Activated CD4-positive, alpha-beta T cell treated with anti-CD3 and anti-CD28 coated beads for 36 hours (primary cell): ENCODE measurements at regions of chr2 and their contacts with region 1.

Region 1: GRCh38 chr2:231411831-231412617 is 16.5 kb downstream of the B3GNT7 start:
- DNase-seq: peak; percentile 86
- ATAC-seq: peak; percentile 99
- H3K4me3 Mint-ChIP-seq: peak overlapping the region; percentile 25
- H3K27ac Mint-ChIP-seq: no peak overlapping the region
- H3K4me1 Mint-ChIP-seq: peaks cover 6% of the 10 kb centered on the region
- H3K27me3 Mint-ChIP-seq: peaks cover 30% of the 10 kb centered on the region

Region 2: DNA sequence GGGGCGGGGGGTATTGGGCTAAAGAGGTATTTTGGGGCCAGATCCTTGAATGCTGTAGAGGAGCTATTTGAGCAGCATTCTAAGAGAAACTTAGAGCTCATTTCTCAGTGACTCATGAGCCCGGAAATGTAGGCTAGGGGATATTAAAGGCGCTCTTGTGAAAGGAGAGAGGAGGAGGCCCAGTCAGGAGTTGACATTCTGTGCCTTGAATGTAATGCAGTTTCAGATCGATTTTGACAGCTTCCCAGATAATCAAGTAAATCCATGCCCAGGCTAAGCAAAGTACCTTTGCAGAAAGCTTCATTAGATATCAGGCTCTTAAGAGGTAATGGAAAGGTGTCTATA is 697.9 kb before region 1 on chr2:
- CTCF ChIA-PET with region 1: no interaction called
- POLR2A ChIA-PET with region 1: no interaction called
- intact Hi-C with region 1: no loop called
- DNase-seq: peak; percentile 57
- ATAC-seq: peak; percentile 72
- H3K4me3 Mint-ChIP-seq: peak overlapping the region; percentile 90
- H3K27ac Mint-ChIP-seq: peak overlapping the region; percentile 92
- H3K4me1 Mint-ChIP-seq: peaks cover 50% of the 10 kb centered on the region
- H3K27me3 Mint-ChIP-seq: no peaks in the 10 kb centered on the region

Region 3: GRCh38 chr2:230847883-230848388 is 564.1 kb before region 1 on chr2:
- CTCF ChIA-PET with region 1: no interaction called
- POLR2A ChIA-PET with region 1: no interaction called
- intact Hi-C with region 1: loop called in 1 of 2 experiments (anchors 10 kb)
- DNase-seq: peak; percentile 98
- ATAC-seq: peak; percentile 97
- H3K4me3 Mint-ChIP-seq: no peak overlapping the region
- H3K27ac Mint-ChIP-seq: peak overlapping the region; percentile 47
- H3K4me1 Mint-ChIP-seq: peaks cover 18% of the 10 kb centered on the region
- H3K27me3 Mint-ChIP-seq: peaks cover 19% of the 10 kb centered on the region

Region 4: GRCh38 chr2:231104115-231104713 is 307.8 kb before region 1 on chr2:
- CTCF ChIA-PET with region 1: interaction called, 16 read pairs
- POLR2A ChIA-PET with region 1: no interaction called
- intact Hi-C with region 1: loop called (anchors 1 kb)
- DNase-seq: peak; percentile 76
- ATAC-seq: peak; percentile 93
- H3K4me3 Mint-ChIP-seq: no peak overlapping the region
- H3K27ac Mint-ChIP-seq: no peak overlapping the region
- H3K4me1 Mint-ChIP-seq: peaks cover 14% of the 10 kb centered on the region
- H3K27me3 Mint-ChIP-seq: no peaks in the 10 kb centered on the region

Region 5: GRCh38 chr2:231227309-231228162 is 184.5 kb before region 1 on chr2:
- CTCF ChIA-PET with region 1: interaction called, 19 read pairs
- POLR2A ChIA-PET with region 1: no interaction called
- intact Hi-C with region 1: loop called (anchors 1 kb)
- DNase-seq: peak; percentile 62
- ATAC-seq: peak; percentile 99
- H3K4me3 Mint-ChIP-seq: no peak overlapping the region
- H3K27ac Mint-ChIP-seq: no peak overlapping the region
- H3K4me1 Mint-ChIP-seq: no peaks in the 10 kb centered on the region
- H3K27me3 Mint-ChIP-seq: no peaks in the 10 kb centered on the region

Region 6: DNA sequence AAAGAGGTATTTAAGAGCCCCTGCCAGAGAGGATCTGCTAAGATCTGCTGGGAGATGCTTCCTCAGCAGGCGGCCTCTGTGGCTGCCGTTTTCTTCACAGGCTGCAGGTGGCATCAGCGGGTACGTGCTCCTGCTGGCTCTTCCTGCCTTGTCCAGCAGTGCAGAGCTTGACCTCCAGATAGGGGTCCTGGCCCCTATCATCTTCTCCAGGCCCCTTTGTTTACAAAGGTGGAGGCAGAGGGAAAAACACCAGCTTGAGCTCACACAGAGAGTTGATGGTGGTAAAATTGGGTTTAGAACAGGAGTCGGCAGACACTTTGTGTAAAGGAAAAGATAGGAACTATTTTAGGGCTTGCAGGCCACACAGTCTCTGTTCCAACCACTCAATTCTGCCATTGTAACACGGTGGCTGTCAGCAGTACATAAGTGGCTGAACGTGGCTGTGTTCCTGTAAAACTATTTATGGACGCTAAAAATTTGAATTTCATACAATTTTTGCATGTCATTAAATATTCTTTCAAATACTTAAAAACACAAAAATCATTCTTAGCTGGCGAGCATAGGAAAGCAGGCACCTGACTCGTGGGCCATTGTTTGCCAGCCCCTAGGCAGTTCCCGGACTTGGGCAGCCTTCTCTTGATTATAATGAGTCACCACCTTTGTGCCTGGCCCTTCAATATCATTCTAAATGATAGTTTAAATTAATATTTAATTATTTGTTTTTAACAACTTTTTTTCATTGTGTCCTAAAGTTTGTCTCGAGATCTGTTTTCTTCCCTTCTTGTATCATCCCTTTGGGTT is 114.7 kb before region 1 on chr2:
- CTCF ChIA-PET with region 1: interaction called, 3 read pairs
- POLR2A ChIA-PET with region 1: no interaction called
- intact Hi-C with region 1: loop called (anchors 1 to 5 kb)
- DNase-seq: peak; percentile 58
- ATAC-seq: peak; percentile 74
- H3K4me3 Mint-ChIP-seq: no peak overlapping the region
- H3K27ac Mint-ChIP-seq: no peak overlapping the region
- H3K4me1 Mint-ChIP-seq: no peaks in the 10 kb centered on the region
- H3K27me3 Mint-ChIP-seq: no peaks in the 10 kb centered on the region

Region 7: DNA sequence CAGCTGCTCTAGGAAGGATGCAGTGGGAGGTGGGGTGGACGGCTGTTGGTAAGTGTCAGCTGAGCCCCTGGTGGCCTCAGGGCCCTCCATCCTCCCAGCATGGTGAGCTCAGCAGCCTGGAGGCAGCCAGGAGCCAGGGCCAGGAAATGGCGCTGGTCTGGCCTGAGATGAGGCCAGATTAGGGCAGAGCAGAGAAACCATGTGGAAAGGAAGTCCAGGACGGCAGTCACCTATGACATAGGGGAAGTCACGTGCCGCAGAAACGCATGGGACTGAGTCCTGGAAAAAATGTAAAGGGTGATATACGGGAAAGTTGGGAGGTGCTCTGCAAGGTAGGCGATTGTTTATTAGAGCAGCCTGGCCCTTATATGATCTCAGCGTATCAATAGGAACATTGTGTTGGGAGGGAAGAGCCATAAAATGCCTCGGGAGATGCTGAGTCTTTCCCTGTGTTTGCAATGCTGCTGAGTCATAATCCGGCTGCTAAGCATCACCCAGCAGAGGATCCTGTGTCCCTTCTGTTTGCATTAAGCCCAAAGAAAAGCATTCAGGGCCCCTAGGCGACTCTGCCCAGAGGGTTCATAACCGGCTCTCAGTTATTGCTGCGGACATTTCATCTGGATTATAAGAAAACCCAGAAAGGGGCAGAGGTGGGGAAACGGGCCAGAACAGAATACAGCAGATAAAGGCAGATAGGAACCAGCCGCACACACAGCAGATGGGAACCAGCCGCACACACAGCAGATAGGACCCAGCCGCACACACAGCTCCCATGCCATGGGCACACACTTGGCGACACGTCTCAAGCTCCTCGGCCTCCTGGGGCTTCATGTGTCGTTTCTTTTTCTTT is 46.8 kb before region 1 on chr2:
- CTCF ChIA-PET with region 1: no interaction called
- POLR2A ChIA-PET with region 1: no interaction called
- intact Hi-C with region 1: no loop called
- DNase-seq: no peak
- ATAC-seq: no peak
- H3K4me3 Mint-ChIP-seq: no peak overlapping the region
- H3K27ac Mint-ChIP-seq: no peak overlapping the region
- H3K4me1 Mint-ChIP-seq: peaks cover 7% of the 10 kb centered on the region
- H3K27me3 Mint-ChIP-seq: no peaks in the 10 kb centered on the region

Region 8: GRCh38 chr2:231425811-231426728 is 14.0 kb after region 1 on chr2:
- CTCF ChIA-PET with region 1: interaction called, 14 read pairs
- POLR2A ChIA-PET with region 1: no interaction called
- intact Hi-C with region 1: no loop called
- DNase-seq: peak; percentile 85
- ATAC-seq: peak; percentile 89
- H3K4me3 Mint-ChIP-seq: no peak overlapping the region
- H3K27ac Mint-ChIP-seq: peak overlapping the region; percentile 76
- H3K4me1 Mint-ChIP-seq: peaks cover 21% of the 10 kb centered on the region
- H3K27me3 Mint-ChIP-seq: peaks cover 3% of the 10 kb centered on the region

Region 9: GRCh38 chr2:231452799-231453508 is 40.9 kb after region 1 on chr2:
- CTCF ChIA-PET with region 1: interaction called, 5 read pairs
- POLR2A ChIA-PET with region 1: interaction called, 3 read pairs
- intact Hi-C with region 1: loop called in 1 of 2 experiments (anchors 1 kb)
- DNase-seq: peak; percentile 26
- ATAC-seq: peak; percentile 26
- H3K4me3 Mint-ChIP-seq: no peak overlapping the region
- H3K27ac Mint-ChIP-seq: no peak overlapping the region
- H3K4me1 Mint-ChIP-seq: peaks cover 18% of the 10 kb centered on the region
- H3K27me3 Mint-ChIP-seq: no peaks in the 10 kb centered on the region